ENCODE measurements at regions of chr19 and their contacts with region 1.

Region 1: GRCh38 chr19:49877020-49877878 is at the starts of genes AKT1S1 and TBC1D17:
- DNase-seq: peak; percentile 97 to 100 (median 99)
- H3K4me3 ChIP-seq: peak within 1 kb of the TSS; percentile 78
- H3K4me3 Mint-ChIP-seq: no peak within 1 kb of the TSS
- H3K27ac ChIP-seq: peak within 1 kb of the TSS; percentile 98
- H3K27ac Mint-ChIP-seq: peak within 1 kb of the TSS in 1 of 8 donors; percentile 85
- H3K4me1 ChIP-seq: peaks cover 19% of the 10 kb centered on the region
- H3K4me1 Mint-ChIP-seq: peaks cover 20 to 31% (median 26%) of the 10 kb centered on the region in 3 donors
- H3K27me3 ChIP-seq: no peaks in the 10 kb centered on the region
- H3K27me3 Mint-ChIP-seq: peaks cover 0 to 3% of the 10 kb centered on the region in 2 donors
- total RNA-seq, gene AKT1S1: 32.8 to 33.6 TPM
- total RNA-seq, gene TBC1D17: 31.7 to 33.5 TPM

Region 2: DNA sequence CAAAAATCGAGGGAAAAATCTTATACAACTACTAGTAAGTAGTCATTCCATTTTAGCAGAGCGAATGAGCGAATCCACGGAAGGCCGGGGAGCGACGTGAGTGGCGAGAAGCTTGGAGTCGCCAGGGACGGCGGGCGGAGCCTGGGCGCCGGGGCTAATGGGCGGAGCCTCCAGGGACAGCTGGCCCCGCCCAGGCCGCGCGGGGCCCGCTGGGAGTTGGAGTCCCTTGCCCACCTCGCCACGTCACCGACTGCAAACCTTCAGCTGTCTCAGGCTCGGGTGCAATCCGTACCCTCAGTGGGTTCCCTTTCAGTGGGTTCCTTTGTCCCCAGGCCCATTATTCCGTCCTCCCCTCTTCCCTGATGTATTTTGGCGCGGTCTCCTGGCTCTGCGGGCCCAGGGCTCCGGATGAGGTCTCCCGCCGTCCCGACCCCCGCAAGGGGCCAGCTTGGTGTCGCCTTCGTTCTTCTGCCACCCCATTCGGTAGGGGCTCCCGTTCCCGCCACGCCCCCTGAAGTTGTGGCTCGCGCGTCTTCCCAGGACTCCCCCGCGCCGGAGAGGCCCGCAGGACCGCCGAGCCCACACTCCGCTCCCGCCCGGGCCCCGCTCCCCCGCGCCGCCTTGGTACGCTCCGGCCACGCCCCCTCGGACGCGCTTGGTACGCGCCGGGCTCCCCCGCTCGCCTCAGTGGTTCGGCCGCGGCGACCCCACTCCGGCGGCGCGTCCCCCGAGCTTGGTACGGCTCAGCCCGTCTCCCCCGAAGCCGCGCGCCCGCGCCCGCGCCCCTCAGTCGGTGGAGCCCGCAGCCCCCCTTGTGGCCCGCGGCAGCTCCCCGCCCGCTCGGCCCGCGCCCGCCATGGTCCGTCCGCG is 26.5 kb before region 1 on chr19 and contains the start of gene PTOV1:
- CTCF ChIA-PET with region 1: interaction called, 3 read pairs
- POLR2A ChIA-PET with region 1: interaction called, 13 read pairs
- DNase-seq: peak; percentile 84 to 90 (median 85)
- H3K4me3 ChIP-seq: peak within 1 kb of the TSS; percentile 79
- H3K4me3 Mint-ChIP-seq: peak within 1 kb of the TSS; percentile 90 to 99 (median 95)
- H3K27ac ChIP-seq: peak within 1 kb of the TSS; percentile 95
- H3K27ac Mint-ChIP-seq: peak within 1 kb of the TSS; percentile 95 to 99 (median 98)
- H3K4me1 ChIP-seq: peaks cover 30% of the 10 kb centered on the region
- H3K4me1 Mint-ChIP-seq: peaks cover 38 to 53% (median 40%) of the 10 kb centered on the region in 3 donors
- H3K27me3 ChIP-seq: no peaks in the 10 kb centered on the region
- H3K27me3 Mint-ChIP-seq: peaks cover 0 to 4% of the 10 kb centered on the region in 2 donors
- total RNA-seq, gene PTOV1: 91.9 to 93.7 TPM

Region 3: DNA sequence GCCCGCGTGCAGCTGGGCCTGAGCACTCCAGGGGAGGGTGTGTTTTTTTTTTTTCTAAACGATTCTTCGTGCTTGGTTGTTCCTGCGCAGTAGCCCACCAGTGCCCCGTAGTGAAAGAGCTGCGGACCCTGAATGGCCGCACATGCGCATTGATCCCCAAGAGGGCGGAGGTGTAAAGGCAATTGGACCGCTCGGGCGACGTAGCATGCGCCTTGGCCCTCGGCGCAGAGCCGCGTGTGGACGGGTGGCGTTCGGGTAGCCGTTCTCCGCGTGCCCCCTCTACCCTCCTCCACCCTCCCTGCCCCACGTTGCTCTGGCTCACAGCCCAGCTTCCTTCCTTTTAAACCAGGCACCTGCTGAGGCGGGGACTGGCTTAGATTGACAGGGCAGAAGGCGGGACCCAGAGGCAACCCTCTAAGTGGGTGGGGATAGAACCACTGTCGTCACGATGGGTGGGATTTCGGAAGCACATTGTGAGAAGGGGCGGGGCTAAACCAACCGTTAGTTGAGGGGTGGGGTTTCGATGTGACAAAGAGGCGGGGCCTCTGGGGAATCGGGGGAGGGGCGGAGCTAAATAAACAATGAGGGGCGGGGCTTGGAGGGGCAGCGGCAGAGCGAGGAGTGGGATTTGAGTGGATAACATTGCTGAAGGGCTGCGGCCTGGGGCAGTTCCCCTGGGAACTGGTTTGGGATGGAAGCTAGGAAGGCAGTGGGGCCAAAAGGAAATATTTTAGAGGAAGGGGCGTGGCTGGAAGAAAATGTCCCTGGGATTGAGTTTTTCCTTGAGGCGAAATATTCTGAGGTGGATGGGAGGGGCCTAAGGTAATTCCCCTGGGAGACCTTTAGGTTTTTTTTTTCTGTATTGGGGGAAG is 52.6 kb after region 1 on chr19:
- CTCF ChIA-PET with region 1: no interaction called
- POLR2A ChIA-PET with region 1: interaction called, 13 read pairs
- DNase-seq: peak; percentile 82 to 96 (median 94)
- H3K4me3 ChIP-seq: peak overlapping the region; percentile 96
- H3K4me3 Mint-ChIP-seq: peak overlapping the region; percentile 92 to 99 (median 98)
- H3K27ac ChIP-seq: peak overlapping the region; percentile 82
- H3K27ac Mint-ChIP-seq: peak overlapping the region; percentile 88 to 99 (median 97)
- H3K4me1 ChIP-seq: peaks cover 46% of the 10 kb centered on the region
- H3K4me1 Mint-ChIP-seq: peaks cover 61 to 73% (median 72%) of the 10 kb centered on the region in 3 donors
- H3K27me3 ChIP-seq: no peaks in the 10 kb centered on the region
- H3K27me3 Mint-ChIP-seq: peaks cover 0 to 7% of the 10 kb centered on the region in 2 donors

Region 4: DNA sequence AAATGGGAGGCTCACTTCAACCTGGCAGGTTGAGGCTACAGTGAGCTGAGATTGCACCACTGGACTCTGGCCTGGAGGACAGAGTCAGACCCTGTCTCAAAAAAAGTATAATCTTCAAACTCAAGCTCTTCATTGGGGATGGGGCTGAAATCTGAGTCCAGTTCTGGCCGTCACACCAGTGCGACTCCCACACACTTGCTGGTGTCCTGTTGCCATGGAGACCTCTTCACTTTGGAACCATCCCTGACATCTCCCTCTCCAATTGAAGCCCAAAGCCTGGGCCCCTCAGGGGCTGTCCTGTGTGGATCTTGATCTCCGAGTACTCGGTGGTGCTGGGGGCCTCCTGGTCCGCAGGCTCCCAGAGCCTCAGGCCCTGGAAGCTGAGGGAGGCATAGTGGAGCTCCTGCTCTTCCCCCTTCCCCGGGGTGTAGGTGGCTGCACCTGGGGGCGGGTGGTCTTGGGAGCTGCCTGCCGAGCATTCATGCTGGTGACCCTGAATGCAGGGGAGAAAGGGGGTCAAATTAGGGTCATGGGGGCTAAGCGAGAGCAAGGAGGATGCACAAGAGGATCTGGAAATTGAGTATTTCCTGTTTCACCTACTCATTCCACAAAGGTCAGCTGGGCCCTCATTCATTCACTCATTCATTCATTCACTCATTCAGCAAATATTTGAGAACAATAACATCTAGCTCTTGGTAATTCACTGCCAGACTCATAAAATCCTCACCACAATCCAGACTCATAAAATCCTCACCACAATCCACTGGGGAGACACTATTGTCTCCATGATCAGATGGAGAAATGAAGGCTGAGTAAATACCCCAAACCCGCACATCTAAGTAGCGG is 72.7 kb after region 1 on chr19:
- CTCF ChIA-PET with region 1: no interaction called
- POLR2A ChIA-PET with region 1: no interaction called
- DNase-seq: no peak
- H3K4me3 ChIP-seq: no peak overlapping the region
- H3K4me3 Mint-ChIP-seq: no peak overlapping the region
- H3K27ac ChIP-seq: no peak overlapping the region
- H3K27ac Mint-ChIP-seq: no peak overlapping the region
- H3K4me1 ChIP-seq: no peaks in the 10 kb centered on the region
- H3K4me1 Mint-ChIP-seq: no peaks in the 10 kb centered on the region
- H3K27me3 ChIP-seq: peaks cover 6% of the 10 kb centered on the region
- H3K27me3 Mint-ChIP-seq: peaks cover 16 to 49% of the 10 kb centered on the region in 2 donors

Measured in CD8-positive, alpha-beta memory T cell (primary cell).